ENCODE measurements at regions of chr17 and their contacts with region 1.

Region 1: GRCh38 chr17:68457539-68458259 is 403 bp upstream of the WIPI1 start:
- DNase-seq: peak; percentile 97
- ATAC-seq: peak; percentile 98
- H3K4me3 Mint-ChIP-seq: peak overlapping the region; percentile 84
- H3K27ac Mint-ChIP-seq: peak overlapping the region; percentile 78
- H3K4me1 Mint-ChIP-seq: peaks cover 21% of the 10 kb centered on the region
- H3K27me3 Mint-ChIP-seq: no peaks in the 10 kb centered on the region
- CTCF ChIP-seq: no peak

Region 2: GRCh38 chr17:66727639-66728570 is 1729.8 kb before region 1 on chr17:
- CTCF ChIA-PET with region 1: no interaction called
- POLR2A ChIA-PET with region 1: no interaction called
- intact Hi-C with region 1: loop called (anchors 10 kb)
- DNase-seq: no peak
- ATAC-seq: peak; percentile 28
- H3K4me3 Mint-ChIP-seq: no peak overlapping the region
- H3K27ac Mint-ChIP-seq: no peak overlapping the region
- H3K4me1 Mint-ChIP-seq: no peaks in the 10 kb centered on the region
- H3K27me3 Mint-ChIP-seq: peaks cover 4% of the 10 kb centered on the region
- CTCF ChIP-seq: no peak

Region 3: GRCh38 chr17:67824735-67825626 is 632.7 kb before region 1 on chr17 and contains the start of gene BPTF:
- CTCF ChIA-PET with region 1: no interaction called
- POLR2A ChIA-PET with region 1: no interaction called
- intact Hi-C with region 1: loop called (anchors 10 kb)
- DNase-seq: peak; percentile 94
- ATAC-seq: peak; percentile 77
- H3K4me3 Mint-ChIP-seq: peak within 1 kb of the TSS; percentile 98
- H3K27ac Mint-ChIP-seq: peak within 1 kb of the TSS; percentile 96
- H3K4me1 Mint-ChIP-seq: peaks cover 67% of the 10 kb centered on the region
- H3K27me3 Mint-ChIP-seq: no peaks in the 10 kb centered on the region
- CTCF ChIP-seq: no peak
- total RNA-seq, gene BPTF: 166 and 174 TPM in 2 replicates

Region 4: GRCh38 chr17:68035523-68036303 is 422.0 kb before region 1 on chr17 and contains the start of gene KPNA2:
- CTCF ChIA-PET with region 1: no interaction called
- POLR2A ChIA-PET with region 1: interaction called, 9 read pairs
- intact Hi-C with region 1: loop called (anchors 1 kb)
- DNase-seq: peak; percentile 80
- ATAC-seq: peak; percentile 89
- H3K4me3 Mint-ChIP-seq: peak within 1 kb of the TSS; percentile 93
- H3K27ac Mint-ChIP-seq: peak within 1 kb of the TSS; percentile 92
- H3K4me1 Mint-ChIP-seq: peaks cover 11% of the 10 kb centered on the region
- H3K27me3 Mint-ChIP-seq: no peaks in the 10 kb centered on the region
- CTCF ChIP-seq: no peak
- total RNA-seq, gene KPNA2: 49.5 and 49.9 TPM in 2 replicates

Region 5: GRCh38 chr17:68205251-68205807 is 252.4 kb before region 1 on chr17:
- CTCF ChIA-PET with region 1: interaction called, 3 read pairs
- POLR2A ChIA-PET with region 1: interaction called, 11 read pairs
- intact Hi-C with region 1: loop called (anchors 1 kb)
- DNase-seq: peak; percentile 95
- ATAC-seq: peak; percentile 79
- H3K4me3 Mint-ChIP-seq: peak overlapping the region; percentile 89
- H3K27ac Mint-ChIP-seq: peak overlapping the region; percentile 94
- H3K4me1 Mint-ChIP-seq: peaks cover 41% of the 10 kb centered on the region
- H3K27me3 Mint-ChIP-seq: peaks cover 2% of the 10 kb centered on the region
- CTCF ChIP-seq: peak; percentile 28

Region 6: DNA sequence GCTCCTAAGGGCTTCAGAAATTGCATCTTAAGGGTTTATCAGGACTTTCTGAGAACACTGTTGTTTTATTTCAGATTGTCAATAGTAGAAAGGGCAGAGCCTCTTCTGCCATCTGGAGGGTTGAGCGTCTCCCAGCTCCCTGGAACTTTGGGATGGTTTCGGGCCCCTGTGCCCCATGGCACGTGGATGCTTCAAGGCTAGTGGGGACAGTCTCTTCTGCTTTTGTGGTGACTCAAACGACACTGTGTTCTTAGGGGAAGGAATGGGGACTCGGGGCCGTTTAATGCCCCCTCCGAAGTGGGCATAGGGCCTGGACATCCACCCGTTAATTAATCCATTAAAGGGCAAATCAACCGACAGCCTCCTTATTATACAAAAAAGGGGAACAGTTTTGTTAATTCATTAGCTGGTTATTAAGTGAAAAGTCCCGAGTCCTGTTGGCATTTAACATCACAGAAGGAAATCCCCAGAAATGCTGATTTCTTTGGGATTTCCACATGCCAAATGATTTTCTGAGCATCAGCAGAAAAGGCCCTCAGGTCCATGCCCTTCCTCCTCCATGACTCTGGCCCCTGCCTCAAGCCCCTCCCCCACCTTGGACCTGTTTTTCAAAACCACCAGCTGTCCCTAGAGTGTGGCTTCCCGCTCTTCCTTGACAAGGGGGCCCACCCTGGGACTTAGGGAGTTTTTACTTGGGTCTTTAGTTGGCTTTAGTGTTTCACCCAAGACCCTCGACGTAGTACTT is 97.7 kb before region 1 on chr17:
- CTCF ChIA-PET with region 1: no interaction called
- POLR2A ChIA-PET with region 1: no interaction called
- intact Hi-C with region 1: no loop called
- DNase-seq: no peak
- ATAC-seq: no peak
- H3K4me3 Mint-ChIP-seq: no peak overlapping the region
- H3K27ac Mint-ChIP-seq: no peak overlapping the region
- H3K4me1 Mint-ChIP-seq: peaks cover 15% of the 10 kb centered on the region
- H3K27me3 Mint-ChIP-seq: peaks cover 23% of the 10 kb centered on the region
- CTCF ChIP-seq: no peak

Region 7: DNA sequence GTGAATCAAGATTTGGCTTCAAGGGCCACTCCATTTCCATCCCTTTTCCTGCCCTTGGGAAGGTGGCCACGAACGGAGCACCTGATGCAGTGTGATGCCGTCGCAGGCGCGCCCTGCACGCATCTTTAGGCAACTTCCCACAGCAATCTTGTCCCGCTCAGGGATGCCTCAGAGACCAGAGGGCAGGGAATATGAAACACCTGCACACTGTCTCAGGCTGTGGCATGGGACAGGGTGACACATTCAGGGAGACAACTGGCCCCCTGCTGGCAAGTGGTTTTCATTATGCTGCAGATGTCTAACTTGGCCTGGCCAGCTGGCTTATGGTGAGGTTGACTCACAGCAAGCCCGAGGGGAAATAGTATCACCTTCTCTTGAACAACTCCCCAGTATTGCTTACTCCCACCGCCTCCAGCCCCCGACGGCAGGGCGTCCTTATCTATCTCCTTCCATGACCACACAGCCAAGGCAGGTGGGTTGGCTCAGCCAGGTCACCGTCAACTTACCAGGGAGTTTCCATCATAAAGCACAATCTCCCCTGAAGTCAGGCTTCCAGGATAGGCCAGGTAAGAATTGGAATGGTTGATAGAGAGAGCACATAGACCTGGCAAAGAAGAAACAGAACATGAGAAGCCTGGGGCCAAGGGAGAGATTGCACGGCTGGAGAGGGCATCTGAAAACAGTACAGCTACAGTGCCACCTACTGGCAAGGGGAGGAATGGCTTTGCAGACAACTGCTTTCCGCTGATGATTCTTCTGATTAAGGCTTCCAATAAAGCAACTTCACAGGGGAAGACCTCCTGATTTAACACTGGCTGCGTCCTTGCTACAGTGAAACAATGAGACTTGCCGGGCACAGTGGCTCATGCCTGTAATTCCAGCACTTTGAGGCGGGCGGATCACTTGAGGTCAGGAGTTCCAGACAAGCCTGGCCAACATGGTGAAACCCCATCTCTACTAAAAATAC is 21.5 kb before region 1 on chr17:
- CTCF ChIA-PET with region 1: interaction called, 21 read pairs
- POLR2A ChIA-PET with region 1: interaction called, 22 read pairs
- intact Hi-C with region 1: loop called (anchors 1 kb)
- DNase-seq: peak; percentile 60
- ATAC-seq: peak; percentile 78
- H3K4me3 Mint-ChIP-seq: no peak overlapping the region
- H3K27ac Mint-ChIP-seq: peak overlapping the region; percentile 54
- H3K4me1 Mint-ChIP-seq: peaks cover 50% of the 10 kb centered on the region
- H3K27me3 Mint-ChIP-seq: no peaks in the 10 kb centered on the region
- CTCF ChIP-seq: peak; percentile 61

Region 8: DNA sequence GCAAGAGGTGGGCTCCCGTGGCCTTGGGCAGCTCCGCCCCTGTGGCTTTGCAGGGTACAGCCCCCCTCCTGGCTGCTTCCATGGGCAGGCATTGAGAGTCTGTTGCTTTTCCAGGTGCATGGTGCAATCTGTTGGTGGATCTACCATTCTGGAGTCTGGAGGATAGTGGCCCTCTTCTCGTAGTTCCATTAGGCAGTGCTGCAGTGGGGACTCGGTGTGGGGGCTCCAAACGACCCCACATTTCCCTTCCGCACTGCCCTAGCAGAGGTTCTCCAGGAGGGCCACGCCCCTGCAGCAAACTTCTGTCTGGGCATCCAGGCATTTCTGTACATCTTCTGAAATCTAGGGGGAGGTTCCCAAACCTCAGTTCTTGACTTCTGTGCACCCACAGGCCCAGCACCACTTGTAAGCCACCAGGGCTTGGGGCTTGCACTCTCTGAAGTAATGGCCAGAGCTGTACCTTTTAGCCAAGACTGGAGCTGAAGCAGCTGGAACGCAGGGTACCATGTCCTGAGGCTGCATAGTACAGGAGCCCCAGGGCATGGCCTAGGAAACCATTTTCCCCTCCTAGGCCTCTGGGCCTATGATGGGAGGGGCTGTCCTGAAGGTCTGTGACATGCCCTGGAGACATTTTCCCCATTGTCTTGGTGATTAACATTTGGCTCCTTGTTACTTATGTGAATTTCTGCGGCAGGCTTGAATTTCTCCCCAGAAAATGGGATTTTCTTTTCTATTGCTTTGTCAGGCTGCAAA is 60.5 kb after region 1 on chr17:
- CTCF ChIA-PET with region 1: no interaction called
- POLR2A ChIA-PET with region 1: no interaction called
- intact Hi-C with region 1: no loop called
- DNase-seq: no peak
- ATAC-seq: no peak
- H3K4me3 Mint-ChIP-seq: no peak overlapping the region
- H3K27ac Mint-ChIP-seq: peak overlapping the region; percentile 19
- H3K4me1 Mint-ChIP-seq: peaks cover 38% of the 10 kb centered on the region
- H3K27me3 Mint-ChIP-seq: no peaks in the 10 kb centered on the region
- CTCF ChIP-seq: no peak